Activated CD8-positive, alpha-beta memory T cell treated with anti-CD3 and anti-CD28 coated beads, Interleukin-2, amount 10 ng/mL, durations not matched to agents 7 days and 5 days (primary cell): ENCODE measurements at regions of chr2 and their contacts with region 1.

Region 1: DNA sequence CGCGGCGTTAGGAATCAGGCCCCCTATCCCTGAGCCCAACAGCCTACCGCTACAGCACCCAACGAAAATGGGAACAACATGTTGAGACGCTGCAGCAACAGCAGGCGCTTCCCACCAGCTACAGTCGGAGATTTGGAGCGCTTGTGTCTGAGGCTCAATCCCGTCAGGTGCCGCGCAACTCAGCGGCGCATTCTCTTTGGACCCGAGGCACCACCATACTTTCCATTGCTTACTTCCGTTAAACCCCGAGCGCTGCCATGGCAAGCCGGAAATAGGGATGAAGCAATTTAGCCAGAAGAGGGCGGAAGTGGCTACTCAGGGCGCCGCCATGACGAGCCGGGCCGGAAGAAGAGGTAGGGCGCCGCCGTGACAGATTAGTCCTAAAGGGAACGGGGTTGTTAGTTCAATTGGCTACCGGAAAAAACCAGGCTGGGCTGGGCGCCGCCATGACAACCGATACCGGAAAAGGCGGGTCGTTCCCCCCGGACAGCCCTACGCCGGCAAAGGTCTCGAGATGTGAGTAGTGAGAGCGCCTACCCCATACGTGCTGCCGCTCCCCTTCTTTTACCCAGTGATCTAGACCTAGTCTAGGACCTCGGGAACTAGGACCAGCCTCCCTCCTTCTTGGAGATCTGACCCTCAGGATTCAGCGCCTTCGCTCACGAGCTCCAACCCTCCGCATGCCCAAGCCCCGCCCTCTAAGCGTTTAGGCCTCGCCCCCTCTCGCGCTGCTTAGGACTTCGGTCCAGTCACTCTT is at the start of gene CHCHD5:
- DNase-seq: peak; percentile 98
- ATAC-seq: peak; percentile 90
- H3K4me3 Mint-ChIP-seq: peak within 1 kb of the TSS; percentile 83
- H3K27ac Mint-ChIP-seq: peak within 1 kb of the TSS; percentile 96
- H3K4me1 Mint-ChIP-seq: peaks cover 39% of the 10 kb centered on the region
- H3K27me3 Mint-ChIP-seq: no peaks in the 10 kb centered on the region
- total RNA-seq, gene CHCHD5: 25.4 to 27.8 TPM

Region 2: DNA sequence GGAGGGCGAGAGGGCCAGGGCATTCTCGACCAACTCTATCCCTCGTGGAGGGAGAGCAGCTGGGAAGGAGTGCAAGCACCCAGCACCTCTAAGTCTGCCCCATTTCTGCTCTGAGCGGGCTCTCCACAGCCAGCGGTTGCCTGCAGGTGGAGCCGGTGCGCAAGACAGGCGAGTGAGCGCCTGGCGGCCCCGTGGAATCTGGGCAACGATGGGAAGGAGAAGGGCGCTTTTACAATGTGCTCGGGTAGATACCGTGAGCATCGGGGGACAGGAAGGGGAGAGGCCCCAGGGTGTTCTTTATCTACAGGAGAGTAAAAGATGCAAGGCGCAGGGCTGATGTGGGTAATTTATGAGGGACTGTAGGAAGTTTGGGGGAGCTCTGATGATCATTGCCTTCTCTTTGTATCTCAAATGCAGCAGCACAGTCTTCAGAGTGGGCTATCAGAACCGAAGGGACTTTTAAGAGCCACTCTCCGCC is 103.2 kb before region 1 on chr2:
- CTCF ChIA-PET with region 1: interaction called, 20 read pairs
- DNase-seq: peak; percentile 91
- ATAC-seq: peak; percentile 83
- H3K4me3 Mint-ChIP-seq: peak overlapping the region; percentile 86
- H3K27ac Mint-ChIP-seq: peak overlapping the region; percentile 88
- H3K4me1 Mint-ChIP-seq: peaks cover 23% of the 10 kb centered on the region
- H3K27me3 Mint-ChIP-seq: peaks cover 6% of the 10 kb centered on the region

Region 3: DNA sequence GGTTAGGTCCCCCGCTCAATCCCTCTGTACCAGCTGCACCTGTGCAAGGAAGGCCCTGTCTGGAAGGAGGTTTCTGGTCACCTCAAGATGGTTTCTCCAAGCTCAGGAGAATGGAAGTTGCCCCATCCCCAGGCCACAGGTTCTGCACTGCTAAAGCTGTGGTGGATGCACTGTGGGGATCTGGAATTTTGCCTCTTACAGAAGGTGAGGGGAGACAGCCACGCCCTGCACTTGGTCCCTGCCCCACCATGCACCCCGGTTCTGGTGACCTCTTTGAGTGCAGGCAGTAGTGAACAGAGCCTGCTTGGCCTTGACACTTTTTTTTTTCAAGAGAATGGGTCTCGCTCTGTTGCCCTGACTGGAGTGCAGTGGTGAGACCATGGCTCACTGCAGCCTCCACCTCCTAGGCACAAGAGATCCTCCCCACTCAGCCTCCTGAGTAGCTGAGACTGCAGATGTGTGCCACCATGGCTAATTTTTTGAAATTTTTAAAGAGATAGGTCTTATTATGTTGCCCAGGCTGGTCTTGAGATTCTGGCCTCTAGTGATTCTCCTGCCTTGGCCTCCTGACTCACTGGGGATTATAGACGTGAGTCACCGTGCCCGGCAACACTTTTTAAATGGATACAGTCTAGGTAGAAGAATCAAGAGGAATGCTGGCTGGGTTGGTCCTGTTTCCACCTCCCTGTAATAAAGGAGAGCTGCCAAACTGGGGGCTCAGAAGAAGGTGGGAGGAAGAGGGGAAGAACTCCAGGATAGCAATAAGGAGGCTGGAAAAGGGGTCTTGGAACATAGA is 130.7 kb after region 1 on chr2:
- CTCF ChIA-PET with region 1: no interaction called
- DNase-seq: no peak
- ATAC-seq: no peak
- H3K4me3 Mint-ChIP-seq: no peak overlapping the region
- H3K27ac Mint-ChIP-seq: no peak overlapping the region
- H3K4me1 Mint-ChIP-seq: peaks cover 19% of the 10 kb centered on the region
- H3K27me3 Mint-ChIP-seq: peaks cover 8% of the 10 kb centered on the region